Heart right ventricle (tissue), 16 donors: ENCODE measurements at regions of chr2 and their contacts with region 1.

Region 1: DNA sequence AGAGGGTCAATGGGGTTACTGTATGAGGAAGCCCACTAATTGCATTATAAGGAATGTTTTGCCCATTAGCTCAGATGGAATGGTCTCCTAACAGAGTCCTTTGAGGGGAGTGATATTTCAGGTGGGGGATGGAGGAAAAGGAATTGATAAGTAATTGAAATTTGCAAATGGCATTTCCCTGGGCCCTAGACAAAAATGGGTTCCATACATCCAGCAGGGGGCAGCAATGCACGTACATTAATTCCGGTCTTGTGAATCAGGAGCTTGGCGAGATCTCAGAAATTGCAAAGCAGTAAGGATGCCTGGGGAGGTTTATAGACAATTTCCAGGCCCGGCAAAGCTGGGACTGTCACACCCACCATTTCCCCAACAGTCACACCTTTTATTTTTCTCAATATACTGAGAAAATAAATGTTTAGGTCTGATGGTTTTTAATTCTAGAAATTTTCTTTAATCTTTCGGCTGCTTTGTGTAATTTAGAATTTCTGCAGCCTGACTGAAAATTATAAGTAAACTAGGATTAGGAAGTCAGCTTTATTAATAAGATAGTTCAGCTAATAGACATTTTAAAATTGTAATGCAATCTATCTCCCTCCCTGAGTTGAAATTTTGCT is 122.8 kb downstream of the LYPD1 start:
- DNase-seq: peak; percentile 23 to 67
- ATAC-seq: peak in 1 of 8 donors; percentile 53
- H3K4me3 ChIP-seq: no peak overlapping the region
- H3K27ac ChIP-seq: no peak overlapping the region
- H3K4me1 ChIP-seq: no peaks in the 10 kb centered on the region
- H3K27me3 ChIP-seq: peaks cover 0 to 10% (median 5%) of the 10 kb centered on the region in 7 donors
- CTCF ChIP-seq: peak; percentile 51 to 75 (median 68)

Region 2: GRCh38 chr2:133146895-133147294 is 599.7 kb after region 1 on chr2:
- intact Hi-C with region 1: loop called in 1 of 10 experiments (anchors 10 kb)
- DNase-seq: no peak
- ATAC-seq: no peak
- H3K4me3 ChIP-seq: no peak overlapping the region
- H3K27ac ChIP-seq: no peak overlapping the region
- H3K4me1 ChIP-seq: no peaks in the 10 kb centered on the region
- H3K27me3 ChIP-seq: no peaks in the 10 kb centered on the region
- CTCF ChIP-seq: peak in 2 of 9 donors; percentile 7 to 23

Region 3: GRCh38 chr2:133166031-133166430 is 618.9 kb after region 1 on chr2:
- intact Hi-C with region 1: loop called in 9 of 10 experiments (anchors 5 to 10 kb)
- DNase-seq: no peak
- ATAC-seq: no peak
- H3K4me3 ChIP-seq: no peak overlapping the region
- H3K27ac ChIP-seq: no peak overlapping the region
- H3K4me1 ChIP-seq: peaks cover 0 to 3% (median 0%) of the 10 kb centered on the region in 9 donors
- H3K27me3 ChIP-seq: no peaks in the 10 kb centered on the region
- CTCF ChIP-seq: no peak

Region 4: DNA sequence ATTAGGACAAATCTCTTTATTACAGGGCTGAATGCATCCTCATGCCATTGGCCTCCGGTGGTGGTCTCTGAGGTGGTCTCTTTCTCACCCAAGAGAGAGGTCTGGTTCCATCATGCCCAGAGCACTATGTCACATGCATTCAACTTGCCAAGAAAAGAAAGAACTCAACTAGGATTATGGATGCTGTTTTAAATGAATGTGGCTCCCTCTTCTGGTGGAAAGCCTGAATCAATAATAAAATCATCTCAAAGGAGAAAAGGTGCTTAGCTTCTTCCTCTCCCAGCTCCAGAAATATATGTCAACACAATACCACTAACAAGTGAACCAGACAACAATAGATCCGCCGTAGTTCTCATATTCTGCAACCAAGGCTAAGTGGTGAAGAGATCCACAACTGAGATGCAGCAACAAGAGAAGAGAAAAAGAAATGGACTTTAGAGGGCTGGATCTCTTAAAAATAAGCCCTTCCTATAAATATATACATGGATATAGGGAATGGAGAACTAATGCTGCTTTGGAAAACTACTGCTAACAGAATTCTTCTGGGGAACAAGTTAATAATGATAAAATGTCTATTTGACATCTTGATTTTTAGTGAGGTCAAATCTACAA is 624.3 kb after region 1 on chr2:
- intact Hi-C with region 1: loop called in 9 of 10 experiments (anchors 5 to 10 kb)
- DNase-seq: peak in 1 of 2 donors; percentile 4
- ATAC-seq: peak in 1 of 8 donors; percentile 35
- H3K4me3 ChIP-seq: no peak overlapping the region
- H3K27ac ChIP-seq: no peak overlapping the region
- H3K4me1 ChIP-seq: no peaks in the 10 kb centered on the region
- H3K27me3 ChIP-seq: no peaks in the 10 kb centered on the region
- CTCF ChIP-seq: peak in 8 of 9 donors; percentile 18 to 64 (median 59)

Region 5: GRCh38 chr2:133844214-133844892 is 1297.2 kb after region 1 on chr2:
- intact Hi-C with region 1: loop called in 7 of 10 experiments (anchors 2 to 10 kb)
- DNase-seq: peak in 1 of 2 donors; percentile 67
- ATAC-seq: peak; percentile 31 to 85 (median 70)
- H3K4me3 ChIP-seq: no peak overlapping the region
- H3K27ac ChIP-seq: no peak overlapping the region
- H3K4me1 ChIP-seq: peaks cover 0 to 16% (median 7%) of the 10 kb centered on the region in 9 donors
- H3K27me3 ChIP-seq: no peaks in the 10 kb centered on the region
- CTCF ChIP-seq: peak; percentile 65 to 91 (median 88)